Activated CD4-positive, alpha-beta T cell treated with anti-CD3 and anti-CD28 coated beads for 36 hours (primary cell): ENCODE measurements at regions of chr11 and their contacts with region 1.

Region 1: DNA sequence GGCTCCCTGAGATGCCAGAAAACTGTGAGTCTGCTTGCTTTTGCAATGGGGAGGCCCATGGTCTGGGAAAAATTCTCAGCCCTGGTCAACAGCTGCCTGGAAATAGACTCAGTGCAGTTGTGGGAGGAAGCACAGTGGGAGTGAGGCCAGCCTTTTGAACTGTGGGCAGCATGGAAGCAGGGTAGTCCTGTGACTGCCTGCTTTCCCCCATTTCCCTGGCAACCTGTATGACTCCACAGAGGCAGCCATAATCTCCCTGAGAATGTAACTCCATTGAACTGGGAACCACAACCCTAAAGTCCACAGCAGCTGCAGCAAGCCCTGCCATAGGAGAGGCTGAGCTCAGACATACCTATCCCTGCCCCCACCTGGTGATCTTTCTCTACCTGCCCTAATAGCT is 494.6 kb upstream of the FAT3 start:
- DNase-seq: no peak
- ATAC-seq: no peak
- H3K4me3 Mint-ChIP-seq: no peak overlapping the region
- H3K27ac Mint-ChIP-seq: no peak overlapping the region
- H3K4me1 Mint-ChIP-seq: no peaks in the 10 kb centered on the region
- H3K27me3 Mint-ChIP-seq: no peaks in the 10 kb centered on the region

Region 2: GRCh38 chr11:91641153-91641552 is 88.9 kb before region 1 on chr11:
- CTCF ChIA-PET with region 1: no interaction called
- POLR2A ChIA-PET with region 1: no interaction called
- intact Hi-C with region 1: no loop called
- DNase-seq: no peak
- ATAC-seq: no peak
- H3K4me3 Mint-ChIP-seq: no peak overlapping the region
- H3K27ac Mint-ChIP-seq: no peak overlapping the region
- H3K4me1 Mint-ChIP-seq: no peaks in the 10 kb centered on the region
- H3K27me3 Mint-ChIP-seq: no peaks in the 10 kb centered on the region

Region 3: GRCh38 chr11:91686700-91687099 is 43.4 kb before region 1 on chr11:
- CTCF ChIA-PET with region 1: no interaction called
- POLR2A ChIA-PET with region 1: no interaction called
- intact Hi-C with region 1: no loop called
- DNase-seq: no peak
- ATAC-seq: no peak
- H3K4me3 Mint-ChIP-seq: no peak overlapping the region
- H3K27ac Mint-ChIP-seq: no peak overlapping the region
- H3K4me1 Mint-ChIP-seq: no peaks in the 10 kb centered on the region
- H3K27me3 Mint-ChIP-seq: no peaks in the 10 kb centered on the region

Region 4: GRCh38 chr11:91790346-91791170 is 60.5 kb after region 1 on chr11:
- CTCF ChIA-PET with region 1: no interaction called
- POLR2A ChIA-PET with region 1: no interaction called
- intact Hi-C with region 1: loop called in 1 of 2 experiments (anchors 10 kb)
- DNase-seq: no peak
- ATAC-seq: no peak
- H3K4me3 Mint-ChIP-seq: no peak overlapping the region
- H3K27ac Mint-ChIP-seq: no peak overlapping the region
- H3K4me1 Mint-ChIP-seq: no peaks in the 10 kb centered on the region
- H3K27me3 Mint-ChIP-seq: no peaks in the 10 kb centered on the region